Posterior vena cava (tissue), 2 donors: ENCODE measurements at regions of chr22 and their contacts with region 1.

Region 1: GRCh38 chr22:41983513-41984405 is 14.5 kb downstream of the SEPTIN3 start:
- DNase-seq: peak; percentile 54

Region 2: DNA sequence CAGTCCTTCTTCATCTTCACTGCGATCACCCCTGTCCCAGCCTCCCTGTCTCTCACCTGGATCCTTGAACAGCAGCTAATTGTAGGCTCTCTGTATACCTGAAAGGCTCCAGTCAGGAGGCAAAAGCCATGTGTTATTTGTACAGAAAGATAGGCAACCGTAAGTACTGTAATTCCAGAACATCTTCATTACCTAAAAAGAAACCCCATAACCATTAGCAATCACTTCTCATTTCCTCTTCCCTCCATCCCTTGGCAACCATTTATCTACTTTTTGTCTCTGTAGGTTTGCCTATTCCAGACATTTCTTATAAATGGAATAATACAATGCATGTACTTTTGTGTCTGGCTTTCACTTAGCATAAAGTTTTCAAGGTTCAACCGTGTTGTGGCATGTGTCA is 69.0 kb after region 1 on chr22:
- intact Hi-C with region 1: no loop called
- DNase-seq: no peak

Region 3: DNA sequence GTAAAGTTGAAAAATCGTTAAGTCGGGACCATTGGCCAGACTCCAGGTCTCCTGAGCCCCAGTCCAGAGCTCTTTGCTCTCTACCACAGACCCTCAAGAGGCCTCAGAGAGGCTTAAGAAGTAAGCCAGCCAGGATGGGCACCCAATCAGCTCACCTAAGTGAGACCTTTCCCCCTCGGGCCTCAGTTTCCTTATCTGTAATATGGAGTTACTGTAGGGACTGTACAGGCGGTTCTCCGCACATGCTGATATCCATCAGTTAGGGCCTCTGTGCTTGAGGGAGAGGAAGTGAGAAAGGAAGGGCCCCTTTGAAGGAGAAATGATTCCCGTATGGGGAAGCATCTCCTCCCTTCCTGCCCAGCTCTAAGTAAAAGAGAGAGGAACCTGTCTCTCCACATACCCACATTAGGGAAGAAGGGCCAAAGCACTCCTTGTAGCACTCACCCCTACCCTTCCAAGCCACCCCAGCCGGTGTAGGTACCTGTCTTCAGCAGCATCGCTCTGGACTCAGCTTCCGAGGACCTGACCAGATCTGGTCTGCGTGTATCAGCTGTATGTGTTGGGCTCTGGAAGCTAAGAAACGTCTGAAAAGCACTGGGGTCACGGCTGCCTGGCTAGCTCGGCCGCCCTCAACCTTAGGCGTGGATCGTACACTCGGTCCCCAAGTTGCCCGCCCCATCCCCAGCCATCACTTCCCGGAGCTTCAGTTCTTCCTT is 86.2 kb after region 1 on chr22:
- intact Hi-C with region 1: loop called in 1 of 2 experiments (anchors 10 kb)
- DNase-seq: no peak

Region 4: DNA sequence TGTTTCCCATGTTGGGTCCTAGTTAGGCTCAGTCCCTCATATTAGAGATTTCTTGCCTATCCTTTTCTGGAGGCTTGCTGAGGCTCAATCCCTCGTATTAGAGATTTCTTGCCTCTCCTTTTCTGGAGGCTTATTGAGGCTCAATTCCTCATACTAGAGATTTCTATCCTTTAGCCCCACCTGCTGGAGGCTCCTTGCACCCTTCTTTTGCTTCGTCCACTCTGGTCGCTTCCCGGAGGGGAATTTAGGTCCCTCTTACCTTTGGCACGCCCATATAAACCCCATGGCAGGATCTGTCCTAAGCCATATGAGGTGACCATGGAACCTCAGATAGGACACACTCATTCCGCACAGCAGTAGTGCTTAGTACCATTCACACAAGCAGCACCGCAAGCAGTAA is 131.0 kb after region 1 on chr22:
- intact Hi-C with region 1: no loop called
- DNase-seq: no peak